Sciatic nerve (tissue), 2 donors: ENCODE measurements at regions of chr12 and their contacts with region 1.

Region 1: GRCh38 chr12:30537228-30537627 is 158.4 kb downstream of the IPO8 start:
- DNase-seq: no peak
- ATAC-seq: no peak

Region 2: DNA sequence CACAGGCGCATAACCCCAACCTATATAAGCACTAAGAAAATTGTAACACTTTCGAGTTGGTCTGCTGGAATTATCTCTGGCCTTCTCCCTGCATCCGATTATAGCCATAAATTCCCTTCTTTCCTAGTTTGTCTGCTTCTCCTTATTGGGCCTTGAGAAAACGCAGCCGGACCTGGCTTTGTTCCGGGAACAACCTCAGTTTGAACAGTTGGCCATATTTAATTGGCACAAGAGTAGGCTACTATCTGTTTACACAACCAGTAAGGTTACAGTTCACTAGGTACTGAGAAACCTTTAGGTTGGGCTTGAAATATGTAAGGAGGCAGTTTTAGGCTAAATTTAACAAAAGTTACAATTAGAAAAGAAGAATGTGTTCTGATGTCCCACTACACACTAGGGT is 17.7 kb before region 1 on chr12:
- intact Hi-C with region 1: loop called (anchors 2 kb)
- DNase-seq: no peak
- ATAC-seq: no peak

Region 3: GRCh38 chr12:32264961-32265360 is 1727.7 kb after region 1 on chr12:
- intact Hi-C with region 1: no loop called
- DNase-seq: no peak
- ATAC-seq: peak; percentile 87